HEK293T (cell line): ENCODE measurements at regions of chr1 and their contacts with region 1.

Region 1: DNA sequence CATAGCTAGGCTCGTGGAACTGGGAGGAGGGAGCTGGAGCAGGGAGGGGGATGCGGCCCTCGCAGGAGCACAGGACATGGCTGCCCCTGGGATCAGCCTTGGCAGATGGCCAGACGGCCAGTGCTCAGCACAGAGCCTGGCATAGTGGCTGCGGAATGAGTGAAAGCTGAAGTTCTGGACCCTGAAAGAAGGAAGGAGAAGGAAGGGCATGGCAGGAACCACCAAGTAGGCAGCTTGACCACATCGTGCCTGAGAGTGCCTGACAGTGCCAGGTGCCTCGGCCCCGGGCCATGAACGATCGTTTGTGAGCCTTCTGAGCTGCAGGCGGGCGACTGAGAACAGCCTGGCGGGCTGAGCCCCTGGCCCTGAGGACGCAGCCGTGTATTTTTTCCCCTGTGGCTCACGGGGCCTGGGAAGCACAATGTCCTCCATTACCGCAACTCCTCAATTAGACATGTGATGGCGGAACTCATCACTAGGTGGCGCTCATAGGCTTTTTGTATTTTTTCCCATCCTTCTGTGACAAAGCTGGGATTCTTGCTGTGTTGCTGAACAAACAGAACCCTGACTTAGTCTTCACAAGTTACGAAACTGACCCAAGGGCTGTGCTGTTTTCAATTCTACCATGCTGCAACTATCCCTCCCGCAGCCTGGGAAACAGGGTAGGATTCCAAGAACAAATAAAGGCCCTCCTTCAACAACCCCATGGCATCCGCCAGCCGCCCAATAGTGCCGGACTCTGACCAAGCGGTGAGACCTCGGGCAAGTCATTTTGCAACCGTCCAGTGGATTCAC is 29.9 kb upstream of the TMEM61 start:
- DNase-seq: peak; percentile 91

Region 2: DNA sequence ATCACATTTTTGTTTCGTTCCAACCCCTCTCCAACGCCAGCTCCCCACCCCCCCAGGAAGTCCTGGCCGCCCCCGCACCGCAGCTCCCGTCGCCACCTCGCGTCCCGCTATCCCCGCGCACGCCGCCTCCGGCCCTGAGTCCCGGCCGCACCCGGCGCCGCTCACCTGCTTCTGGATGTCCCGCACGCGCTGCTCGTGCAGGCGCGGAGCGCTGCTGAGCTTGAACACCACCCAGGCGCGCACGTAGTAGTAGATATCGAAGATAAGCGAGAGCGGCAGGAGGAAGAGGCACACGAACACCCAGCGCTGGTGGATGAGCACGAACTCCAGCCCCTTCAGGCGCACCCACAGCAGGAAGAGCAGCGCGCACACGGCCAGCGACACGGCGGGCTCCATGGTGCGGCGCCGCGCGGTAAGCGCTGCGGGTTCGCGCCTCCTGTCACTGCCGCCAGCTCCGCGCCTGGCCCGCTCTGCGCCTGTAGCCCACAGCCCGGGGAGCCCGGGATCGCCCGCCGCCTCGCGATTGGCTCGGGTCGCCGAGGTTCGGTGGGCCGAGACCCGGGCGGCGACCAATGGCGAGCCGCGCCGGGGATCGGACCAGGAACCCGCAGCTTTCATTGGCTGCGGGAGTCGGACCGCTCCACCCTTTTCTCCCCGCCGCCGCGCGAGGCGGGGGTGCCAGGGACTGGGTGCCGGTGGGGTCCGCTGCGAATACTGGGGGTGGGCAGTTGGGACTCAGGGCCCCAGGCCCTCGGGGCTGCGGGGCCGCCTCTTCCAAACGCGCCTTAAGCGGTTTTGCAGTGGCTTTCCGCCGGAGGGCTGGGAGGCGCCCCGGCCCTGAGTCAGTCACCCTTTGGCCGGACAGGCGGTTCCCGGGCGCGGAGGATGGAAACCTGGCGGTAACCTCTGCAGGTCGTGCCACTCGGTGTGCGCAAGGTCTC is 63.6 kb before region 1 on chr1 and contains the start of gene DHCR24:
- CTCF ChIA-PET with region 1: interaction called, 4 read pairs
- POLR2A ChIA-PET with region 1: interaction called, 10 read pairs
- DNase-seq: peak; percentile 99

Region 3: GRCh38 chr1:54922921-54923531 is 27.5 kb before region 1 on chr1:
- CTCF ChIA-PET with region 1: no interaction called
- POLR2A ChIA-PET with region 1: no interaction called
- DNase-seq: no peak

Region 4: DNA sequence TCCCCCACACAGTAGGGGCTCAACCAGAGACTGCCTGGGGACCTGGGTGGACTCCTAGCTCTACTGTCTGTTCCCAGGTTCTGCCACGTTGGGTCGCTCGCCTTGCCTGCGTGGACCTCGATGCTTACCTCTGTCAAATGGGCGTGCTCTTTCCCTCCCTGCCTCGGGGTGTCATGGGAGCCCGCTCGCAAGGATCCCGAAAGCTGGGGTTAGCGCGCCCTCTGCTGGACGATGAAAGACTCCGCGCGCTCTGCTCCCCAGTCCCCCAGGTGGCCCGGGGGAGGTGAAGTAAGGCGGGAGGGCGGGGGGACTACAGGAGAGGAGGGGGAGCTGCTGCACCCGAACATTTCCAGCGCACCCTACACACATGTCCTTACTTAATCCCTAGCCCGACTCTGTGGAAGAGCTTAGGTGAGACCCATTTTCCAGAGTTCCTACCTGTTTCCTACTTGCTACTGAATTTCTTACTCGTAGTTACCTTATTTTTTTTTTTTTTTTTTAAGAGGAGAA is 45.8 kb after region 1 on chr1:
- CTCF ChIA-PET with region 1: interaction called, 45 read pairs
- POLR2A ChIA-PET with region 1: no interaction called
- DNase-seq: peak; percentile 97

Region 5: DNA sequence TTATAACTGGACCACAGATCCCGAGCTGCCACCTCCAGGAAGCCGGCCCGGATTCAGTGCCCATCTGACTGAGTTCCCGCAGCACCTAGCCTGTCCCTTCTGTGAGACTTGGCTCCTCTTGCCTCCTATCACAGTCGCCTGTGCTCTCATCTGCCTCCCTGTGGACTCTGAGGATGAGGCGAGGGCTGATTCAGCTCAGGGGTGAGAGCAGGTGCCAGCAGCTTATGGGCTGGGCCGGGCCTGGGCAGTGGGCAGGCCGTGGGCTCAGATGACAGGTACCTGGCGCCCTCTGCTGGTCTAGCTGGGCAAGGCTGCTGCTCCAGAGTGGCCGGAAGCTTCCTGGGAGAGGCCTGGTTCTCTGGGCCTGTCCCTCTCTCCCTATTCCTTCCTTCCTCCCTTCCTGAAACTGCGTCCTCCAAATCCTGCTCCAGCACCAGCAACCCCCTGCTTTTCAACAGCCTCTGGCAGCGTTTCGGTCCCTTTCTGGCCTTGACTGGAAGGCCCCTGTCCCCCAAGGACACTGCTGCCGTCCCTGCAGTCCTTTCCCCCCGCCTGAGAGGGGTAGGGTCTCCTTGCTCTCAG is 71.5 kb after region 1 on chr1:
- CTCF ChIA-PET with region 1: interaction called, 39 read pairs
- POLR2A ChIA-PET with region 1: interaction called, 6 read pairs
- DNase-seq: peak; percentile 98